ENCODE measurements at regions of chr6 and their contacts with region 1.

Region 1: GRCh38 chr6:52407467-52407866 is 12.7 kb upstream of the EFHC1 start:
- DNase-seq: peak; percentile 65
- H3K4me3 ChIP-seq: no peak overlapping the region
- H3K27ac ChIP-seq: no peak overlapping the region
- H3K4me1 ChIP-seq: peaks cover 0 to 11% of the 10 kb centered on the region in 2 experiments; a peak in 1 of 4 replicates
- H3K27me3 ChIP-seq: no peaks in the 10 kb centered on the region
- CTCF ChIP-seq: peak; percentile 68
- EP300 ChIP-seq: no peak
- RAD21 ChIP-seq: peak; percentile 85

Region 2: GRCh38 chr6:52271852-52272460 is 135.5 kb before region 1 on chr6:
- CTCF ChIA-PET with region 1: no interaction called
- POLR2A ChIA-PET with region 1: no interaction called
- DNase-seq: no peak
- H3K4me3 ChIP-seq: no peak overlapping the region
- H3K27ac ChIP-seq: no peak overlapping the region
- H3K4me1 ChIP-seq: no peaks in the 10 kb centered on the region
- H3K27me3 ChIP-seq: no peaks in the 10 kb centered on the region
- CTCF ChIP-seq: no peak
- EP300 ChIP-seq: no peak
- RAD21 ChIP-seq: no peak

Region 3: GRCh38 chr6:52352239-52353008 is 55.0 kb before region 1 on chr6:
- CTCF ChIA-PET with region 1: no interaction called
- POLR2A ChIA-PET with region 1: no interaction called
- DNase-seq: no peak
- H3K4me3 ChIP-seq: no peak overlapping the region
- H3K27ac ChIP-seq: peak overlapping the region in 1 of 2 experiments; percentile 72; a peak in 2 of 4 replicates
- H3K4me1 ChIP-seq: peaks cover 0 to 2% of the 10 kb centered on the region in 2 experiments; a peak in 1 of 4 replicates
- H3K27me3 ChIP-seq: no peaks in the 10 kb centered on the region
- CTCF ChIP-seq: no peak
- EP300 ChIP-seq: no peak
- RAD21 ChIP-seq: no peak

Region 4: GRCh38 chr6:52389626-52390360 is 17.7 kb before region 1 on chr6:
- CTCF ChIA-PET with region 1: interaction called, 15 read pairs
- POLR2A ChIA-PET with region 1: no interaction called
- DNase-seq: peak; percentile 63
- H3K4me3 ChIP-seq: peak overlapping the region; percentile 10 to 31; a peak in 3 of 4 replicates
- H3K27ac ChIP-seq: peak overlapping the region; percentile 79 to 90
- H3K4me1 ChIP-seq: peaks cover 17 to 20% of the 10 kb centered on the region in 2 experiments; a peak in 3 of 4 replicates
- H3K27me3 ChIP-seq: no peaks in the 10 kb centered on the region
- CTCF ChIP-seq: peak; percentile 42
- EP300 ChIP-seq: peak in 1 of 2 experiments; percentile 14; a peak in 1 of 4 replicates
- RAD21 ChIP-seq: peak; percentile 55